Naive thymus-derived CD4-positive, alpha-beta T cell (primary cell): ENCODE measurements at regions of chr6 and their contacts with region 1.

Region 1: GRCh38 chr6:33391278-33391921 is at the start of gene KIFC1:
- DNase-seq: peak; percentile 94 to 99 (median 99)
- ATAC-seq: peak; percentile 92
- H3K4me3 ChIP-seq: peak within 1 kb of the TSS; percentile 58
- H3K4me3 Mint-ChIP-seq: peak within 1 kb of the TSS; percentile 82 to 93 (median 85)
- H3K27ac ChIP-seq: peak within 1 kb of the TSS; percentile 81
- H3K27ac Mint-ChIP-seq: peak within 1 kb of the TSS; percentile 94 to 98 (median 97)
- H3K4me1 ChIP-seq: peaks cover 13% of the 10 kb centered on the region in 2 donors
- H3K4me1 Mint-ChIP-seq: peaks cover 11 to 47% (median 22%) of the 10 kb centered on the region in 7 donors
- H3K27me3 ChIP-seq: no peaks in the 10 kb centered on the region
- H3K27me3 Mint-ChIP-seq: peaks cover 0 to 5% (median 0%) of the 10 kb centered on the region in 5 donors
- total RNA-seq, gene KIFC1: 0.65 to 87.9 (median 1.6) TPM

Region 2: GRCh38 chr6:33248925-33249731 is 142.3 kb before region 1 on chr6:
- CTCF ChIA-PET with region 1: no interaction called
- POLR2A ChIA-PET with region 1: no interaction called
- intact Hi-C with region 1: loop called in 1 of 2 experiments (anchors 1 kb)
- DNase-seq: peak; percentile 79 to 97 (median 94)
- ATAC-seq: peak; percentile 91
- H3K4me3 ChIP-seq: peak overlapping the region; percentile 81
- H3K4me3 Mint-ChIP-seq: peak overlapping the region; percentile 81 to 94 (median 90)
- H3K27ac ChIP-seq: peak overlapping the region; percentile 96
- H3K27ac Mint-ChIP-seq: peak overlapping the region; percentile 82 to 98 (median 94)
- H3K4me1 ChIP-seq: peaks cover 11 to 15% of the 10 kb centered on the region in 2 donors
- H3K4me1 Mint-ChIP-seq: peaks cover 26 to 43% (median 35%) of the 10 kb centered on the region in 7 donors
- H3K27me3 ChIP-seq: no peaks in the 10 kb centered on the region
- H3K27me3 Mint-ChIP-seq: peaks cover 0 to 4% (median 0%) of the 10 kb centered on the region in 5 donors

Region 3: GRCh38 chr6:33317669-33318425 is 73.6 kb before region 1 on chr6 and contains the start of gene ZBTB22:
- CTCF ChIA-PET with region 1: no interaction called
- POLR2A ChIA-PET with region 1: interaction called, 4 read pairs
- intact Hi-C with region 1: loop called (anchors 1 kb)
- DNase-seq: peak; percentile 87 to 97 (median 96)
- ATAC-seq: peak; percentile 73
- H3K4me3 ChIP-seq: peak within 1 kb of the TSS; percentile 97
- H3K4me3 Mint-ChIP-seq: peak within 1 kb of the TSS; percentile 81 to 100 (median 100)
- H3K27ac ChIP-seq: peak within 1 kb of the TSS; percentile 99
- H3K27ac Mint-ChIP-seq: peak within 1 kb of the TSS; percentile 97 to 99 (median 98)
- H3K4me1 ChIP-seq: peaks cover 59 to 62% of the 10 kb centered on the region in 2 donors
- H3K4me1 Mint-ChIP-seq: peaks cover 53 to 85% (median 75%) of the 10 kb centered on the region in 7 donors
- H3K27me3 ChIP-seq: no peaks in the 10 kb centered on the region
- H3K27me3 Mint-ChIP-seq: peaks cover 0 to 2% (median 0%) of the 10 kb centered on the region in 5 donors
- total RNA-seq, gene ZBTB22: 15.5 to 30.1 (median 20.5) TPM

Region 4: DNA sequence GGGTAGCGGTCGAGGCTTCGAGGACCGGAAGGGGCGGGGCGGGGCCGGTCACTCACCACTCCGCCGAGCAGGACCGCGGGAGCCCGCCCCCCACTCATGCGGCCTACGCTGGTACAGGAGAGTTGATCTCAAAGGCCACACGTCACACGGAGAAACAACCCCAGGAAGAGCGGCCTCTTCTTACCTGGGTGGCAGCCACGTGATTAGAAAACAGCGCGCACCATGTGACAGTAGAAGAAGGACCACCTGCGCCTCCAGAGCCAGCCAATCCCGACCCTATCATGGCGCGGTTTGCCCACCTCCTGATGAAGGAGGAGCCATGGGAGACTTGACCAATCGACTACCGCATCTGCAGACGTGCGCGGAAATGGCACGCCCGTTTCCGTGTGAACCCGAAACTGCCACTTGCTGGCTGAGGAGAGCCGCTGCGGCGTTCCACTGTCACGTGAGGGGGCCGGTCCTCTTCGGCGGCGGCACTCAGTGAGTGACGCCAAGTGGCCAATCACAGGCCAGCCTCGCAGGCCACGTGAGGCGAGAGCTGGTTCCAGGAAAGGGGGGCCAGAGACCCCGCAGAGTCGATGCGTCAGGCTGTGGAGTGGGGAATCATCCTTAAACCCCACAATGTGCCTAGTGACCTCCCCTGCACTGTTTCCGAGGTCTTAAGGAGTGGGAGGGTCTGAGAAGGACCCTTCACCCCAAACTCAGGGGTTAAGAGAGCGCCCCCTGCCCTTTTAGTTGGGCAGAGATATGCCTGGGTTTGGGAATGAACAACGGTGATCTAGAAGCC is 26.7 kb after region 1 on chr6 and contains the start of gene CUTA:
- CTCF ChIA-PET with region 1: interaction called, 3 read pairs
- POLR2A ChIA-PET with region 1: interaction called, 9 read pairs
- intact Hi-C with region 1: loop called (anchors 1 kb)
- DNase-seq: peak; percentile 91 to 100 (median 99)
- ATAC-seq: peak; percentile 92
- H3K4me3 ChIP-seq: peak within 1 kb of the TSS; percentile 74
- H3K4me3 Mint-ChIP-seq: peak within 1 kb of the TSS; percentile 88 to 97 (median 94)
- H3K27ac ChIP-seq: peak within 1 kb of the TSS; percentile 94
- H3K27ac Mint-ChIP-seq: peak within 1 kb of the TSS; percentile 98 to 100 (median 99)
- H3K4me1 ChIP-seq: peaks cover 31 to 54% of the 10 kb centered on the region in 2 donors
- H3K4me1 Mint-ChIP-seq: peaks cover 60 to 89% (median 73%) of the 10 kb centered on the region in 7 donors
- H3K27me3 ChIP-seq: no peaks in the 10 kb centered on the region
- H3K27me3 Mint-ChIP-seq: no peaks in the 10 kb centered on the region
- total RNA-seq, gene CUTA: 148 to 235 (median 158) TPM

Region 5: GRCh38 chr6:33481189-33481588 is 89.8 kb after region 1 on chr6:
- CTCF ChIA-PET with region 1: no interaction called
- POLR2A ChIA-PET with region 1: no interaction called
- intact Hi-C with region 1: loop called in 1 of 2 experiments (anchors 1 kb)
- DNase-seq: peak in 5 of 9 donors; percentile 2 to 19 (median 9)
- ATAC-seq: no peak
- H3K4me3 ChIP-seq: no peak overlapping the region
- H3K4me3 Mint-ChIP-seq: no peak overlapping the region
- H3K27ac ChIP-seq: no peak overlapping the region
- H3K27ac Mint-ChIP-seq: no peak overlapping the region
- H3K4me1 ChIP-seq: no peaks in the 10 kb centered on the region
- H3K4me1 Mint-ChIP-seq: no peaks in the 10 kb centered on the region
- H3K27me3 ChIP-seq: no peaks in the 10 kb centered on the region
- H3K27me3 Mint-ChIP-seq: peaks cover 0 to 17% (median 0%) of the 10 kb centered on the region in 5 donors

Region 6: GRCh38 chr6:33579828-33580714 is 188.7 kb after region 1 on chr6 and contains the start of gene BAK1:
- CTCF ChIA-PET with region 1: no interaction called
- POLR2A ChIA-PET with region 1: no interaction called
- intact Hi-C with region 1: loop called (anchors 1 kb)
- DNase-seq: peak; percentile 54 to 86 (median 78)
- ATAC-seq: peak; percentile 98
- H3K4me3 ChIP-seq: peak within 1 kb of the TSS; percentile 92
- H3K4me3 Mint-ChIP-seq: peak within 1 kb of the TSS; percentile 93 to 99 (median 96)
- H3K27ac ChIP-seq: peak within 1 kb of the TSS; percentile 83
- H3K27ac Mint-ChIP-seq: peak within 1 kb of the TSS; percentile 94 to 99 (median 97)
- H3K4me1 ChIP-seq: peaks cover 13 to 25% of the 10 kb centered on the region in 2 donors
- H3K4me1 Mint-ChIP-seq: peaks cover 26 to 43% (median 39%) of the 10 kb centered on the region in 7 donors
- H3K27me3 ChIP-seq: no peaks in the 10 kb centered on the region
- H3K27me3 Mint-ChIP-seq: no peaks in the 10 kb centered on the region
- total RNA-seq, gene BAK1: 16.9 to 78.8 (median 22.0) TPM

Region 7: GRCh38 chr6:33840048-33840926 is 448.9 kb after region 1 on chr6:
- CTCF ChIA-PET with region 1: no interaction called
- POLR2A ChIA-PET with region 1: no interaction called
- intact Hi-C with region 1: no loop called
- DNase-seq: peak in 1 of 9 donors; percentile 50
- ATAC-seq: peak; percentile 83
- H3K4me3 ChIP-seq: no peak overlapping the region
- H3K4me3 Mint-ChIP-seq: peak overlapping the region in 1 of 10 donors; percentile 63
- H3K27ac ChIP-seq: no peak overlapping the region
- H3K27ac Mint-ChIP-seq: peak overlapping the region in 3 of 9 donors; percentile 19 to 61 (median 46)
- H3K4me1 ChIP-seq: peaks cover 0 to 13% of the 10 kb centered on the region in 2 donors
- H3K4me1 Mint-ChIP-seq: peaks cover 8 to 25% (median 12%) of the 10 kb centered on the region in 7 donors
- H3K27me3 ChIP-seq: no peaks in the 10 kb centered on the region
- H3K27me3 Mint-ChIP-seq: peaks cover 0 to 14% (median 0%) of the 10 kb centered on the region in 5 donors